CD4-positive, alpha-beta memory T cell (primary cell): ENCODE measurements at regions of chr10 and their contacts with region 1.

Region 1: DNA sequence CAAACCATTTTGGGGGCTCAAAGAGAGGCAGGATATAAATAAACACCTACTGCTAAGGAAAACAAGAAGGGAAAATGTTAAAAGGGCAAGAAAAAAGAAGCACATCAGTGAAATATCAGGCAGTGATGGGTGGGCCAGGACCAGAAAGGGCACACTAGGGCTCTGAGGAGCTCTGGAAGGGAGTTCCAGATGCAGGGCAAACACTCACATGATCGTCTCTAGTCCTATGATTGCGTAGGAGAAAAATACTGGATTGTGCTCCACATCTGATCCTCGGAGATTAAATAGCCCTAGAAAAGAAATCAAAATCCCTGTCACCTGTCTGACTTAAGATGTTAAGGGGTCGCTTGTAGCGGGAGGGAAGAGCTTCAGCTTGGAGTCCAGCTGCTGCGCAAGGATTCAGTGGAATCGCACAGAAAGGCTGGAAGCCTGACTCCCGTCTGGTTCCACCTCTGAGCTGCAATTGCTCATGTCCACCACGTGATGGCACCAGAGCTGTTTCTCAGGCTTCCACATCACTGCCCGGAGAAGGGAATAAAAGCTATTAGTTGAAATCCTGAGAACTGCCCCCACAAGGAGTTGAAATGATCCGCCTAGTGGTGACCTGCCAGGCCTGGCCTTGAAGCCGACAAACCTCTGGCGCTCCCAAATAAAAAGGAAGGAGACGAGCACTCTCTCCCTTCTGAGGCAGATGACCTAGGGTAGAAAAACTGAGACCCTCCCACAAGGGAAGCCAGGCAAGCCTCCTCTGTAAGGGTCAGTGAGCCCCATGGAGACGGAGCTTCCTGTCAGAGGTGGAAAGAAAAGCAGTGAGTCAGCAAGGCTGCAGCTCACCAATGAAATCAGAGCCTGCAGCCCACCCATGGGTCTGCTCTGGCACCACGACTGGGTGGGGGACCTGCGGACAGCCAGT is 39.2 kb downstream of the XPNPEP1 start:
- DNase-seq: peak; percentile 56 to 66 (median 61)
- H3K4me3 ChIP-seq: no peak overlapping the region
- H3K4me3 Mint-ChIP-seq: no peak overlapping the region
- H3K27ac ChIP-seq: no peak overlapping the region
- H3K27ac Mint-ChIP-seq: peak overlapping the region in 4 of 7 donors; percentile 24 to 82 (median 62)
- H3K4me1 ChIP-seq: peaks cover 8% of the 10 kb centered on the region
- H3K4me1 Mint-ChIP-seq: peaks cover 4 to 24% (median 14%) of the 10 kb centered on the region in 4 donors
- H3K27me3 ChIP-seq: no peaks in the 10 kb centered on the region
- H3K27me3 Mint-ChIP-seq: no peaks in the 10 kb centered on the region

Region 2: DNA sequence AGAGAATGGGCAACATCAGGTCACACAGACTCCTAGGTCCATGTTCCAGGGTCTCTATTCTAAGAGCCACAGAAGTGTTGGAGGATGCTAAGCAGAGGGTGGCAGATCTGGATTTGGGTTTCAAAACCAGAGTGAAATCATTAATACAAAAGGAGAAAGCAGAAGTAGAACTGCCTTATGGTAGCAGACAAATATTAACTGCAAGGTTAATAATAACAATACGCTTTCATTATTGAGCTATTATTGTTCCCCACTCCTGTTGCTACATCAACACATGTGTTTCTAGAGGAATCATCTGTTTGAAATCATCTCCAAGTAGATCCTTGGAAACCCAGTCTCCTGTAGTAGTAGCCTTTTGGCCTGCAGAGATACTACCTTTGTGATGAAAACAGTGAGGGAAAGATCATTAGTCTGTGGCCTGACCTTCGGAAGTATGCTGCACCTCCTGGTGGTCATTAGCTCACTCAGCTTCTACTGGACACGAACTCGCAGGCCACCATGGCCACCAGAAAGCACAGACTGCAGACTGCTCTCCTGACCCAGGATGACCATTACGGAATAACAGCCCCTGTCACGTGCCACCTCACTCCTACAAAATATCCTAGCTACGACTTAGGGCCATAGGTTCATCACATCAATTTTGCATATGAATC is 45.4 kb before region 1 on chr10:
- CTCF ChIA-PET with region 1: no interaction called
- POLR2A ChIA-PET with region 1: no interaction called
- intact Hi-C with region 1: no loop called
- DNase-seq: no peak
- H3K4me3 ChIP-seq: no peak overlapping the region
- H3K4me3 Mint-ChIP-seq: no peak overlapping the region
- H3K27ac ChIP-seq: no peak overlapping the region
- H3K27ac Mint-ChIP-seq: no peak overlapping the region
- H3K4me1 ChIP-seq: no peaks in the 10 kb centered on the region
- H3K4me1 Mint-ChIP-seq: no peaks in the 10 kb centered on the region
- H3K27me3 ChIP-seq: no peaks in the 10 kb centered on the region
- H3K27me3 Mint-ChIP-seq: peaks cover 6 to 11% of the 10 kb centered on the region in 2 donors

Region 3: GRCh38 chr10:109902934-109903589 is 18.9 kb after region 1 on chr10:
- CTCF ChIA-PET with region 1: interaction called, 43 read pairs
- POLR2A ChIA-PET with region 1: interaction called, 5 read pairs
- intact Hi-C with region 1: no loop called
- DNase-seq: peak in 3 of 5 donors; percentile 26 to 56 (median 39)
- H3K4me3 ChIP-seq: peak overlapping the region in 1 of 2 donors; percentile 13
- H3K4me3 Mint-ChIP-seq: peak overlapping the region in 7 of 8 donors; percentile 57 to 88 (median 79)
- H3K27ac ChIP-seq: no peak overlapping the region
- H3K27ac Mint-ChIP-seq: peak overlapping the region; percentile 73 to 95 (median 89)
- H3K4me1 ChIP-seq: peaks cover 35% of the 10 kb centered on the region
- H3K4me1 Mint-ChIP-seq: peaks cover 38 to 82% (median 68%) of the 10 kb centered on the region in 4 donors
- H3K27me3 ChIP-seq: no peaks in the 10 kb centered on the region
- H3K27me3 Mint-ChIP-seq: no peaks in the 10 kb centered on the region

Region 4: DNA sequence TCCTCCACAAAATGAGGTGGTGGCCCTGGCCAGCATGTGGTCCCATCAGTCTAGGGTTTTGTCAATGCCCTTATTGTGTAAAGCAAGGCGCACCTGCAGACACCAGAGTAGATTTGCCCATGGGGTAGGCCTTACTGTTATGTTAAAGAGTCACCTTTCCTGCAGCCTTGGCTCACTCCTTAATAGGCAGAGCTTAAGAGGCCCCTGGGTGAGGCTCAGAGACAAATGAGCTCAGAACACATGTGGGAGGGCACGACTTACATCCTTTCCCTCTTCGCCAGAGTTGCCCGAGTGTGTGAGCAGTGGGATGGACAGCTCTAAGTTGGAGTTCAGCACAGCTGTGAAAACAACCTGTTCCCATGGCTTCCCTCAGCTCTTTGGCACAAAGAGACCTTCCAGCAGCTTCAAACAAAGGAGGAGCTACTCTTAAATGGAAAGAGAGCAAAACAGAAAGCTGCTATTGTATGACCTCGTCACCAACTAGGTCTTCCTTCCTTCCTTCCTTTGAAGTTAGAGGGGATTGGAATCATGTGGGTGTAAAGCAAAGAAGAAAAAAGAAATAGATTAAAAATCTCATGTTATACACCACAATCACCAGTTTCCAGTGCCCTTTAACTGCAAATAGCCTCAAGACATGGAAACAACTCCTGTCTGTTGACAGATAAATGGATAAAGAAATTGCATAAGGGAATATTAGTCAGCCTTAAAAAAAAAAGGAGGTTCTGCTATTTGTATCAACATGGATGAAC is 51.0 kb after region 1 on chr10:
- CTCF ChIA-PET with region 1: interaction called, 17 read pairs
- POLR2A ChIA-PET with region 1: interaction called, 3 read pairs
- intact Hi-C with region 1: loop called (anchors 5 kb)
- DNase-seq: peak; percentile 24 to 46 (median 44)
- H3K4me3 ChIP-seq: peak overlapping the region in 1 of 2 donors; percentile 26
- H3K4me3 Mint-ChIP-seq: peak overlapping the region; percentile 74 to 95 (median 88)
- H3K27ac ChIP-seq: peak overlapping the region; percentile 37
- H3K27ac Mint-ChIP-seq: peak overlapping the region; percentile 90 to 98 (median 97)
- H3K4me1 ChIP-seq: peaks cover 71% of the 10 kb centered on the region
- H3K4me1 Mint-ChIP-seq: peaks cover 47 to 80% (median 63%) of the 10 kb centered on the region in 4 donors
- H3K27me3 ChIP-seq: no peaks in the 10 kb centered on the region
- H3K27me3 Mint-ChIP-seq: no peaks in the 10 kb centered on the region

Region 5: GRCh38 chr10:110016039-110016438 is 131.9 kb after region 1 on chr10:
- CTCF ChIA-PET with region 1: interaction called, 31 read pairs
- POLR2A ChIA-PET with region 1: no interaction called
- intact Hi-C with region 1: loop called (anchors 10 kb)
- DNase-seq: no peak
- H3K4me3 ChIP-seq: no peak overlapping the region
- H3K4me3 Mint-ChIP-seq: peak overlapping the region in 7 of 8 donors; percentile 16 to 75 (median 57)
- H3K27ac ChIP-seq: no peak overlapping the region
- H3K27ac Mint-ChIP-seq: peak overlapping the region; percentile 79 to 85 (median 83)
- H3K4me1 ChIP-seq: peaks cover 92% of the 10 kb centered on the region
- H3K4me1 Mint-ChIP-seq: peaks cover 60 to 92% (median 76%) of the 10 kb centered on the region in 4 donors
- H3K27me3 ChIP-seq: no peaks in the 10 kb centered on the region
- H3K27me3 Mint-ChIP-seq: no peaks in the 10 kb centered on the region

Region 6: DNA sequence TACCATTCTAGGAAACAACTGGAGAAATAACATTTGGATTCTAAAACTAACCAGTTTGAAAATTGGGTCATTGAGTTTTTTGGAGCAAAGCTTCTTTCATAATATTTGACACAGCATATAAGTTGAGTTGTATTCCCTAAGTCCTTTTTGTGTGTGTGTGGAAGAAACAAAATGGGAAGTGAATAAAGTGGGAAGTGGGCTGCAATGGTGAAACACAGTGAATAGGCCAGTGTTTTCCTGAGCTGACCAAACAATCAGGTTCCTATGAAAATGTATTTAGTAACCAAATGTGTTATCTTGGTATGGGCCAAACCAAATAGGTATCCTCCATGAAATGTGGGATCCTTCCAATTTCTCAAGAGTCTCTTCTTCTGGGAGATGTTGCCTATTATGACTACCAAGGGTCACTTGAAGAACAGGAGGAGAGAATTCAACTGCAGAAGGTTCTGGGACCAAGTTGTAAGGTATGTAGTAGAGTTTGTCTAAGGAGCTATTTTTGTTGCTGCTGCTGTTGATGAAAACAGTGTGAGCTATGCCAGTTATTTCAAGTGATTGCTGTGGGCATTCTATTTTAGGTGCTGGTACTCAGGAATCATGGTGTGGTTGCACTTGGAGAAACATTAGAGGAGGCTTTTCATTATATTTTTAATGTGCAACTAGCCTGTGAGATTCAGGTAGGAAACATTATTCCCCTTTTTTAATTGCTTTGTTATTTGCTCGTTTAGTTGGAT is 234.9 kb after region 1 on chr10:
- CTCF ChIA-PET with region 1: interaction called, 13 read pairs
- POLR2A ChIA-PET with region 1: no interaction called
- intact Hi-C with region 1: no loop called
- DNase-seq: no peak
- H3K4me3 ChIP-seq: no peak overlapping the region
- H3K4me3 Mint-ChIP-seq: no peak overlapping the region
- H3K27ac ChIP-seq: no peak overlapping the region
- H3K27ac Mint-ChIP-seq: peak overlapping the region in 5 of 7 donors; percentile 0 to 83 (median 18)
- H3K4me1 ChIP-seq: no peaks in the 10 kb centered on the region
- H3K4me1 Mint-ChIP-seq: peaks cover 0 to 12% (median 3%) of the 10 kb centered on the region in 4 donors
- H3K27me3 ChIP-seq: no peaks in the 10 kb centered on the region
- H3K27me3 Mint-ChIP-seq: no peaks in the 10 kb centered on the region

Region 7: DNA sequence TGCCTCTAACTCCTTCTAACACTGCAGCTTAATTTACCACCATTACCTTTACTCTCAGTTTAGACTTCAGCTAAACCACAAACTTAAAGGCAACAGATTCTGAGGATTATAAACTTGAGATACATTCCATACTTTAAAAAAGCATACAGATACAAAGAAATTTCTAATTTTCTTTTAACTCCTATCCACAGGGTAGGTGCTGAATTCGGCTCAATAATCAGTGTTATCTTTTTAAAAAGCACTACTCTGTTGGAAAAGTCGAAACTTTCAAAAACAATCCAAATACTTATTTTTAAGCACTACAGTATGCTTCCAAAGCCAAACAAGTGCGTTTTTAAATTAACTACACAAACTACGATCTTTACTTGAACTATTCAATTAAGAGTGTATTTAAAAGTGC is 419.6 kb after region 1 on chr10:
- CTCF ChIA-PET with region 1: no interaction called
- POLR2A ChIA-PET with region 1: no interaction called
- intact Hi-C with region 1: no loop called
- DNase-seq: no peak
- H3K4me3 ChIP-seq: peak overlapping the region; percentile 62 to 64
- H3K4me3 Mint-ChIP-seq: peak overlapping the region; percentile 90 to 98 (median 93)
- H3K27ac ChIP-seq: peak overlapping the region; percentile 81
- H3K27ac Mint-ChIP-seq: peak overlapping the region; percentile 86 to 95 (median 91)
- H3K4me1 ChIP-seq: peaks cover 64% of the 10 kb centered on the region
- H3K4me1 Mint-ChIP-seq: peaks cover 27 to 66% (median 52%) of the 10 kb centered on the region in 4 donors
- H3K27me3 ChIP-seq: no peaks in the 10 kb centered on the region
- H3K27me3 Mint-ChIP-seq: no peaks in the 10 kb centered on the region